GM10248 (cell line): ENCODE measurements at regions of chr6 and their contacts with region 1.

Region 1: GRCh38 chr6:32622545-32623401 is 14.4 kb upstream of the HLA-DQA1 start:
- DNase-seq: peak; percentile 59
- CTCF ChIP-seq: peak; percentile 42

Region 2: GRCh38 chr6:31559958-31560696 is 1062.6 kb before region 1 on chr6:
- CTCF ChIA-PET with region 1: no interaction called
- POLR2A ChIA-PET with region 1: no interaction called
- DNase-seq: peak; percentile 74
- CTCF ChIP-seq: no peak

Region 3: GRCh38 chr6:32609731-32610640 is 12.8 kb before region 1 on chr6:
- CTCF ChIA-PET with region 1: interaction called, 17 read pairs
- POLR2A ChIA-PET with region 1: interaction called, 3 read pairs
- DNase-seq: peak; percentile 62
- CTCF ChIP-seq: no peak

Region 4: GRCh38 chr6:32637219-32637880 is 14.6 kb after region 1 on chr6 and contains the start of gene HLA-DQA1:
- CTCF ChIA-PET with region 1: interaction called, 16 read pairs
- POLR2A ChIA-PET with region 1: interaction called, 8 read pairs
- DNase-seq: peak; percentile 78
- CTCF ChIP-seq: no peak

Region 5: GRCh38 chr6:32832535-32832934 is 209.8 kb after region 1 on chr6:
- CTCF ChIA-PET with region 1: no interaction called
- POLR2A ChIA-PET with region 1: no interaction called
- DNase-seq: no peak
- CTCF ChIP-seq: no peak